Naive thymus-derived CD4-positive, alpha-beta T cell (primary cell): ENCODE measurements at regions of chr14 and their contacts with region 1.

Region 1: GRCh38 chr14:77707724-77708408 is at the starts of genes ALKBH1 and SLIRP:
- DNase-seq: peak; percentile 73 to 91 (median 87)
- ATAC-seq: peak; percentile 98
- H3K4me3 ChIP-seq: peak within 1 kb of the TSS; percentile 88
- H3K4me3 Mint-ChIP-seq: peak within 1 kb of the TSS; percentile 86 to 98 (median 94)
- H3K27ac ChIP-seq: peak within 1 kb of the TSS; percentile 79
- H3K27ac Mint-ChIP-seq: peak within 1 kb of the TSS; percentile 91 to 99 (median 94)
- H3K4me1 ChIP-seq: peaks cover 22 to 24% of the 10 kb centered on the region in 2 donors
- H3K4me1 Mint-ChIP-seq: peaks cover 26 to 58% (median 44%) of the 10 kb centered on the region in 7 donors
- H3K27me3 ChIP-seq: no peaks in the 10 kb centered on the region
- H3K27me3 Mint-ChIP-seq: no peaks in the 10 kb centered on the region
- total RNA-seq, gene ALKBH1: 10.2 to 20.3 (median 14.1) TPM
- total RNA-seq, gene SLIRP: 35.9 to 66.6 (median 45.5) TPM

Region 2: DNA sequence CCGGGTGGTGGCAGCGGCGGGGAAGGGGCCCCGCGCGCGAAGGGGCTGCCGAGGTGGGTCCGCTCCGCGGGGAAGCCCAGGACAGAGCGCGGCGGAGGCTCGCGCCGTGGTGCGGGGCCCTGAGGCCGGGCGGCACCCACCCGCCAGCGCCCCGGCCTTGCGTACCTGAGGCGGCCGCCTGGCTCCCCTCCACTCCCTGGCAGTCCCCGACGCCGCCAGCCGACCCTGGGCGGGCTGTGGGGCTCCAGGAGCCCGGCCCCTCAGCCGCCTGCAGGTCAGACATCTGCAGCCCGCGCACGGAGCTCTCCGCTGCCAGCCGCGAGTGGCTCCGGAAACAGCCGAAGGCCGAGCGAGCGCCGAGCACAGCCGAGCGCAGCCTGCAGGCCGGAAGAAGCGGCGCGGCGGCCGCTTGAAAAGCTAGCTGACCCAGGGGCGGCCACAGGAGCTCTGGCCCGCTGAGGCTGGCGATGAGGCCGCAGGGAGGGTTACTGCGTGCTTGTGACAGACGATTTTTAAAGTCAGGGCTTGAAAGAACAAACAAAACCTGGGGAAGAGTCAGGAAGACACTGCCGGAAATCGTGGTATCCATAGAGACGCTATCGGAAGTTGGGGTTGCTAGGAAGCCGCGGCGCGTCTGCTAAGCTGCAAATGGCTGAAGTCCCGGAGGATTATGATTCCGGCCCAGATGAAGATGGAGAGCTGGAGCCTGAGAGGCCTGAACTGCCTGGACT is 330.9 kb before region 1 on chr14 and contains the starts of genes SAMD15 and TMED8:
- CTCF ChIA-PET with region 1: no interaction called
- POLR2A ChIA-PET with region 1: interaction called, 3 read pairs
- intact Hi-C with region 1: loop called (anchors 1 kb)
- DNase-seq: peak; percentile 77 to 88 (median 83)
- ATAC-seq: peak; percentile 96
- H3K4me3 ChIP-seq: peak within 1 kb of the TSS; percentile 99
- H3K4me3 Mint-ChIP-seq: peak within 1 kb of the TSS in 7 of 10 donors; percentile 88 to 97 (median 93)
- H3K27ac ChIP-seq: peak within 1 kb of the TSS; percentile 87
- H3K27ac Mint-ChIP-seq: peak within 1 kb of the TSS; percentile 52 to 93 (median 77)
- H3K4me1 ChIP-seq: peaks cover 14 to 18% of the 10 kb centered on the region in 2 donors
- H3K4me1 Mint-ChIP-seq: peaks cover 17 to 41% (median 39%) of the 10 kb centered on the region in 7 donors
- H3K27me3 ChIP-seq: no peaks in the 10 kb centered on the region
- H3K27me3 Mint-ChIP-seq: peaks cover 0 to 10% (median 0%) of the 10 kb centered on the region in 5 donors
- total RNA-seq, gene SAMD15: 0.27 to 0.46 (median 0.42) TPM in 3 of 5 experiments, not detected in the others
- total RNA-seq, gene TMED8: 5.5 to 18.6 (median 7.0) TPM

Region 3: GRCh38 chr14:77565289-77565993 is 142.4 kb before region 1 on chr14:
- CTCF ChIA-PET with region 1: no interaction called
- POLR2A ChIA-PET with region 1: no interaction called
- intact Hi-C with region 1: loop called (anchors 5 to 10 kb)
- DNase-seq: no peak
- ATAC-seq: peak; percentile 73
- H3K4me3 ChIP-seq: no peak overlapping the region
- H3K4me3 Mint-ChIP-seq: no peak overlapping the region
- H3K27ac ChIP-seq: no peak overlapping the region
- H3K27ac Mint-ChIP-seq: peak overlapping the region in 2 of 9 donors; percentile 12 to 69
- H3K4me1 ChIP-seq: no peaks in the 10 kb centered on the region
- H3K4me1 Mint-ChIP-seq: peaks cover 0 to 10% (median 5%) of the 10 kb centered on the region in 7 donors
- H3K27me3 ChIP-seq: no peaks in the 10 kb centered on the region
- H3K27me3 Mint-ChIP-seq: no peaks in the 10 kb centered on the region

Region 4: DNA sequence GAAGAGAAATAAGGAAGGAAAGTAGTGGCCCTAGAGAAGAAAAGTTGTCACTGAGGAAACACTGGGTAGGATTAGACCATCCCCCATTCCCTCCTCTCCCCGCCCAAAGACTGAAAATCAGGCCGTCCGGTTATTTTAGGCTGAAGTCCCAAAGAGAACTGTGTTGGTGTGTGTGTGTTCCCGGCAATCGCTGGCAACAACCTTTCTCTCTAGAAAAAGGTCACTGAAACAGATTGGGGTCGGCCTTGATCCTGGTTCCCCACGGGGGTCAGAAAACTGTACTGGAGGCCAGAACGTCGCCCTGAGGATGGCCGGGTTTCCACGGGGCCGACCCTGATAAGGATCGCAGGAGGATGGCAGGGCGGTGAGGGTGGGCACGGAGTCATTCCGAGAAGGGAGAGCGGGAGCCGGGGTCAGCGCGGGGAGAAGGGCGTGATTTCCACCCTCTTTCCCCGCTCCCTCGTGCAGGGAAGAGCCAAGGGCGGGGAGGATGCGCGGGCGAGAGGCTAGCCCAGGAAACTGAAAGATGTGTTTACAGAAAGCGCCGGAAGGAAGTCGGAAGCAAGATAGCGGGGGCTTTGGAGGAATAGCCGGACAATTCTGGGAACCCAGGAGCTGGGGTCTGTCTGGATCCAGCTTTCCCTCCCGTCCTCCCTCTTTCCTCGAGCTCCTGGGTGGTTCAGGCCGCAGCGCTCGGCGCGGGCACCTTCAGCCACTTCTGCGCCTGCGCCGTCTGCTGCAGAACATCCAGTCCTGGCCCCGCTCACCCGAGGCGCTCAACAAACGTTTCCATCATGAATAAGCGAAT is 66.1 kb before region 1 on chr14:
- CTCF ChIA-PET with region 1: no interaction called
- POLR2A ChIA-PET with region 1: no interaction called
- intact Hi-C with region 1: loop called in 1 of 2 experiments (anchors 1 kb)
- DNase-seq: peak; percentile 33 to 68 (median 59)
- ATAC-seq: peak; percentile 80
- H3K4me3 ChIP-seq: peak overlapping the region; percentile 84
- H3K4me3 Mint-ChIP-seq: peak overlapping the region; percentile 84 to 95 (median 92)
- H3K27ac ChIP-seq: peak overlapping the region; percentile 70
- H3K27ac Mint-ChIP-seq: peak overlapping the region; percentile 90 to 97 (median 92)
- H3K4me1 ChIP-seq: peaks cover 8% of the 10 kb centered on the region in 2 donors
- H3K4me1 Mint-ChIP-seq: peaks cover 0 to 19% (median 16%) of the 10 kb centered on the region in 7 donors
- H3K27me3 ChIP-seq: no peaks in the 10 kb centered on the region
- H3K27me3 Mint-ChIP-seq: peaks cover 0 to 3% (median 0%) of the 10 kb centered on the region in 5 donors

Region 5: GRCh38 chr14:77667331-77667730 is 40.5 kb before region 1 on chr14:
- CTCF ChIA-PET with region 1: no interaction called
- POLR2A ChIA-PET with region 1: no interaction called
- intact Hi-C with region 1: no loop called
- DNase-seq: no peak
- ATAC-seq: no peak
- H3K4me3 ChIP-seq: no peak overlapping the region
- H3K4me3 Mint-ChIP-seq: no peak overlapping the region
- H3K27ac ChIP-seq: no peak overlapping the region
- H3K27ac Mint-ChIP-seq: peak overlapping the region in 3 of 9 donors; percentile 13 to 31 (median 19)
- H3K4me1 ChIP-seq: no peaks in the 10 kb centered on the region
- H3K4me1 Mint-ChIP-seq: peaks cover 0 to 7% (median 0%) of the 10 kb centered on the region in 7 donors
- H3K27me3 ChIP-seq: no peaks in the 10 kb centered on the region
- H3K27me3 Mint-ChIP-seq: no peaks in the 10 kb centered on the region

Region 6: GRCh38 chr14:77799863-77800730 is 92.2 kb after region 1 on chr14 and contains the start of gene ADCK1:
- CTCF ChIA-PET with region 1: no interaction called
- POLR2A ChIA-PET with region 1: interaction called, 3 read pairs
- intact Hi-C with region 1: loop called (anchors 1 kb)
- DNase-seq: peak; percentile 74 to 87 (median 84)
- ATAC-seq: peak; percentile 94
- H3K4me3 ChIP-seq: peak within 1 kb of the TSS; percentile 71
- H3K4me3 Mint-ChIP-seq: peak within 1 kb of the TSS; percentile 83 to 89 (median 87)
- H3K27ac ChIP-seq: peak within 1 kb of the TSS; percentile 81
- H3K27ac Mint-ChIP-seq: peak within 1 kb of the TSS; percentile 34 to 92 (median 78)
- H3K4me1 ChIP-seq: no peaks in the 10 kb centered on the region
- H3K4me1 Mint-ChIP-seq: peaks cover 0 to 17% (median 6%) of the 10 kb centered on the region in 7 donors
- H3K27me3 ChIP-seq: no peaks in the 10 kb centered on the region
- H3K27me3 Mint-ChIP-seq: no peaks in the 10 kb centered on the region
- total RNA-seq, gene ADCK1: 4.5 to 10.6 (median 10.3) TPM